ENCODE measurements at regions of chr12 and their contacts with region 1.

Region 1: DNA sequence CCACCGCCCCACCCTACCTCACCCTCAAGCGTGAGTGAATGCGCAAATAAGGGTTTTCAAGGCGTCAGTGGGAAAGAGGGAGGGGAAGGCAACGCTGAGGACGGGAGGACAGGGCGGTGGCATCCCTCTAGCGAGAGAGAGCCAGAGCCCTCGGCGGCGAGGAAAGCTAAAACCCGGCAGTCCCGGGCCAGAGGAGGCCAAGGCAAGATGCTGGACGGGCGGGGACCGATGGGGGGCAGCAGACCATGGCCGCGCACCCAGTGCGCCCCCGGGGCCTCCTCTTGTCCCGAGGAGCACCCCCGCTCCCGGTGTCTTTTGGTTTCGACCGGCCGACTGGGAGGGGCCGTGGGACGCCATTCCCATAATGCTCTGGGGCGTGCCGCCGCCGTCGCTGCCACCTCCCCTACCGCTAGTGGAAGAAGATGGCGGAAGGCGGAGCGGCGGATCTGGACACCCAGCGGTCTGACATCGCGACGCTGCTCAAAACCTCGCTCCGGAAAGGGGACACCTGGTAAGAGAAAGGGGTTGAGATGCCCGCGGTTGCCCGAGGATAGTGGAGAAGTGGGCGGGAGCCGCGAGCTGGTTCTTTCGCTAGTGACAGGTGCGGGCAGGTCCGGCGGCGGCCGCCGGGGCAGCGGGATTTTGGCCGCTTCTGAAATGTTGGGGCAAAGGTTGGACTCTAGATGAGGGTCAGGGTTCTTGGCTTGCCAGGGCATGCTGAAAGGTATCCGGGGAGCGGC is at the start of gene USP15:
- DNase-seq: peak; percentile 92 to 96 (median 96)
- ATAC-seq: peak; percentile 91
- H3K4me3 ChIP-seq: peak within 1 kb of the TSS; percentile 96
- H3K4me3 Mint-ChIP-seq: peak within 1 kb of the TSS; percentile 90 to 100 (median 96)
- H3K27ac ChIP-seq: peak within 1 kb of the TSS; percentile 98
- H3K27ac Mint-ChIP-seq: peak within 1 kb of the TSS; percentile 97 to 99 (median 98)
- H3K4me1 ChIP-seq: peaks cover 46 to 49% of the 10 kb centered on the region in 2 donors
- H3K4me1 Mint-ChIP-seq: peaks cover 28 to 69% (median 62%) of the 10 kb centered on the region in 7 donors
- H3K27me3 ChIP-seq: no peaks in the 10 kb centered on the region
- H3K27me3 Mint-ChIP-seq: peaks cover 0 to 3% (median 0%) of the 10 kb centered on the region in 5 donors
- total RNA-seq, gene USP15: 156 to 224 (median 180) TPM

Region 2: GRCh38 chr12:62158461-62159360 is 101.5 kb before region 1 on chr12:
- CTCF ChIA-PET with region 1: no interaction called
- POLR2A ChIA-PET with region 1: interaction called, 9 read pairs
- intact Hi-C with region 1: loop called in 1 of 2 experiments (anchors 2 kb)
- DNase-seq: peak in 7 of 9 donors; percentile 16 to 75 (median 58)
- ATAC-seq: peak; percentile 57
- H3K4me3 ChIP-seq: no peak overlapping the region
- H3K4me3 Mint-ChIP-seq: peak overlapping the region in 9 of 10 donors; percentile 48 to 84 (median 69)
- H3K27ac ChIP-seq: no peak overlapping the region
- H3K27ac Mint-ChIP-seq: peak overlapping the region in 8 of 9 donors; percentile 57 to 96 (median 78)
- H3K4me1 ChIP-seq: peaks cover 0 to 31% of the 10 kb centered on the region in 2 donors
- H3K4me1 Mint-ChIP-seq: peaks cover 3 to 66% (median 57%) of the 10 kb centered on the region in 7 donors
- H3K27me3 ChIP-seq: no peaks in the 10 kb centered on the region
- H3K27me3 Mint-ChIP-seq: peaks cover 0 to 8% (median 0%) of the 10 kb centered on the region in 5 donors

Region 3: DNA sequence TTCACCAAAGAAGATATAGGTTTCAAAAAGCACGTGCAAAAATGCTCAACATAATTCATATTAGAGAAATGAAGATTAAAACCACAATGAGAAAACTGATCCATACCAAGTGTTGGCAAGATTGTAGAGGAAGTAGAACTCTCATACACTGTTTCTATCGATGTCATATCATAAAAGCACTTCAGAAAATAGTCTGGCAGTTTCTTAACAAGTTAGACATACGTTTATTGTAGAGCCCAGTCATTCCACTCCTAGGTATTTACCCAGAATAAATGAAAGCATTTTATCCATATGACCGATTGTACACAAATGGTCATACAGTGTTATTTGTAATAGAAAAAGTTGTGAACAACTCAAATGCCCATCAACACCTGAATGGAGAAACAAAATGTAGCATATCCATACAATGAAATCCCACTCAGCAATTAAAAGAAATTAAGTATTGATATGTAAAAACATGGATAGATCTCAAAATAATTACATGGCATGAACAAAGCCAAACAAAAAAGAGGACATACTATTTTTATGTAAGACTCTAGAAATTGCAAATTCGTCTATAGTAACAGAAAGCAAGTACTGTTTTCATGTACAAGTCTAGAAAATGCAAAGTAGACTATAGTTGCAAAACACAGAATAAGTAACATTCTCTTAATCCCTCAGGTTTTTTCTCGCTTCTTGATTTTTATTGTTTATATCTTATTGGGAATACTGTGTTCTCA is 41.1 kb after region 1 on chr12:
- CTCF ChIA-PET with region 1: no interaction called
- POLR2A ChIA-PET with region 1: no interaction called
- intact Hi-C with region 1: loop called in 1 of 2 experiments (anchors 5 kb)
- DNase-seq: no peak
- ATAC-seq: no peak
- H3K4me3 ChIP-seq: no peak overlapping the region
- H3K4me3 Mint-ChIP-seq: peak overlapping the region in 5 of 10 donors; percentile 3 to 56 (median 12)
- H3K27ac ChIP-seq: no peak overlapping the region
- H3K27ac Mint-ChIP-seq: peak overlapping the region in 5 of 9 donors; percentile 12 to 51 (median 24)
- H3K4me1 ChIP-seq: peaks cover 9% of the 10 kb centered on the region in 2 donors
- H3K4me1 Mint-ChIP-seq: peaks cover 36 to 77% (median 69%) of the 10 kb centered on the region in 7 donors
- H3K27me3 ChIP-seq: no peaks in the 10 kb centered on the region
- H3K27me3 Mint-ChIP-seq: no peaks in the 10 kb centered on the region

Region 4: GRCh38 chr12:62396750-62397149 is 136.6 kb after region 1 on chr12:
- CTCF ChIA-PET with region 1: no interaction called
- POLR2A ChIA-PET with region 1: no interaction called
- intact Hi-C with region 1: loop called in 1 of 2 experiments (anchors 5 kb)
- DNase-seq: no peak
- ATAC-seq: no peak
- H3K4me3 ChIP-seq: no peak overlapping the region
- H3K4me3 Mint-ChIP-seq: no peak overlapping the region
- H3K27ac ChIP-seq: no peak overlapping the region
- H3K27ac Mint-ChIP-seq: peak overlapping the region in 1 of 9 donors; percentile 49
- H3K4me1 ChIP-seq: no peaks in the 10 kb centered on the region
- H3K4me1 Mint-ChIP-seq: peaks cover 5 to 10% (median 7%) of the 10 kb centered on the region in 7 donors
- H3K27me3 ChIP-seq: no peaks in the 10 kb centered on the region
- H3K27me3 Mint-ChIP-seq: no peaks in the 10 kb centered on the region

Region 5: GRCh38 chr12:62793256-62794217 is 533.4 kb after region 1 on chr12:
- CTCF ChIA-PET with region 1: no interaction called
- POLR2A ChIA-PET with region 1: no interaction called
- intact Hi-C with region 1: loop called (anchors 5 to 10 kb)
- DNase-seq: peak; percentile 32 to 77 (median 62)
- ATAC-seq: peak; percentile 86
- H3K4me3 ChIP-seq: no peak overlapping the region
- H3K4me3 Mint-ChIP-seq: no peak overlapping the region
- H3K27ac ChIP-seq: no peak overlapping the region
- H3K27ac Mint-ChIP-seq: no peak overlapping the region
- H3K4me1 ChIP-seq: no peaks in the 10 kb centered on the region
- H3K4me1 Mint-ChIP-seq: peaks cover 0 to 4% (median 0%) of the 10 kb centered on the region in 7 donors
- H3K27me3 ChIP-seq: no peaks in the 10 kb centered on the region
- H3K27me3 Mint-ChIP-seq: peaks cover 0 to 21% (median 0%) of the 10 kb centered on the region in 5 donors

Region 6: DNA sequence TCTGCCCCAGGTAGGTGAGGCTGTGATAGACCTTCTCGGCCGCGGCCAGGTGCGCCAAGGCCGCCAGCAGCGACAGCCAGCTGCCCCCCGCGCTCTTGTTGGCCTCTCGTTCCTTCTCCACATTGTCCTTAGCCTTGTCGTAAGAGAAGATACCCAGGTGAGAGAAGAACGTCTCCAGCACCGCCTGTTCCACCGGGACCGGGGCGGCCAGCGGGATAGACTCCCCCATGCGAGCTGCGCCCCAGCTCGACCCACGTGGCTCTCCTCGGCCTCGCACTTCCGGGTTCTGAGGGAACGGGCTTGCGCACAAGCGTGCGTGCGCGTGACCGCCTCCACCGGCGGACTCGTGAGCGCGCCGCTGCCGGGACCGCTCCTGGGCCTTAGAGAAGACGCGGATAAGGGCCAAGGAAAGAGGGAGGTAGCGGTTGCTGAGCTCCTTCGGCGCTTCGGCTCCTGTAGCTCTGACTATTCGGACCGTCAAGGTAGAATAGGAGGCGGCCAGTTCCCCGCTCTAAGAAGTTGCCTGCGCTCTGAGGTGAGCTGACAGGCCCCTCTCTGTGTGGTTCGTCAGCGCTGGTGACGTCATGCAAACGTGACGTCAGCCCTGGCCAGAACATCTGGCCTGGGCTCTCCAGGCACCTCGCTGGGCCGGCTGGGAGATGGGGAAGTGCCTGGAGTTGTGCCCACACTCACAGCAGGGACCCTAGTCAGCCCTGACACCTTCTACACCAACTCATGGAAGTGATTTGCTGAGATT is 1962.0 kb after region 1 on chr12 and contains the start of gene KICS2:
- CTCF ChIA-PET with region 1: no interaction called
- POLR2A ChIA-PET with region 1: no interaction called
- intact Hi-C with region 1: loop called in 1 of 2 experiments (anchors 2 kb)
- DNase-seq: peak; percentile 89 to 95 (median 93)
- ATAC-seq: peak; percentile 96
- H3K4me3 ChIP-seq: peak within 1 kb of the TSS; percentile 87
- H3K4me3 Mint-ChIP-seq: peak within 1 kb of the TSS; percentile 86 to 100 (median 98)
- H3K27ac ChIP-seq: peak within 1 kb of the TSS; percentile 92
- H3K27ac Mint-ChIP-seq: peak within 1 kb of the TSS; percentile 94 to 100 (median 98)
- H3K4me1 ChIP-seq: peaks cover 8 to 19% of the 10 kb centered on the region in 2 donors
- H3K4me1 Mint-ChIP-seq: peaks cover 17 to 51% (median 41%) of the 10 kb centered on the region in 7 donors
- H3K27me3 ChIP-seq: no peaks in the 10 kb centered on the region
- H3K27me3 Mint-ChIP-seq: peaks cover 0 to 21% (median 8%) of the 10 kb centered on the region in 5 donors
- total RNA-seq, gene KICS2: 11.7 to 26.9 (median 19.5) TPM